ENCODE measurements at regions of chr3 and their contacts with region 1.

Region 1: GRCh38 chr3:58177747-58178527 is 32.8 kb downstream of the DNASE1L3 start:
- DNase-seq: peak; percentile 76 to 98
- H3K4me3 ChIP-seq: peak overlapping the region; percentile 15
- H3K4me1 ChIP-seq: no peaks in the 10 kb centered on the region
- H3K27me3 ChIP-seq: no peaks in the 10 kb centered on the region

Region 2: GRCh38 chr3:58082047-58082446 is 95.9 kb before region 1 on chr3:
- in situ Hi-C with region 1: no loop called
- DNase-seq: no peak
- H3K4me3 ChIP-seq: no peak overlapping the region
- H3K4me1 ChIP-seq: no peaks in the 10 kb centered on the region
- H3K27me3 ChIP-seq: no peaks in the 10 kb centered on the region

Region 3: DNA sequence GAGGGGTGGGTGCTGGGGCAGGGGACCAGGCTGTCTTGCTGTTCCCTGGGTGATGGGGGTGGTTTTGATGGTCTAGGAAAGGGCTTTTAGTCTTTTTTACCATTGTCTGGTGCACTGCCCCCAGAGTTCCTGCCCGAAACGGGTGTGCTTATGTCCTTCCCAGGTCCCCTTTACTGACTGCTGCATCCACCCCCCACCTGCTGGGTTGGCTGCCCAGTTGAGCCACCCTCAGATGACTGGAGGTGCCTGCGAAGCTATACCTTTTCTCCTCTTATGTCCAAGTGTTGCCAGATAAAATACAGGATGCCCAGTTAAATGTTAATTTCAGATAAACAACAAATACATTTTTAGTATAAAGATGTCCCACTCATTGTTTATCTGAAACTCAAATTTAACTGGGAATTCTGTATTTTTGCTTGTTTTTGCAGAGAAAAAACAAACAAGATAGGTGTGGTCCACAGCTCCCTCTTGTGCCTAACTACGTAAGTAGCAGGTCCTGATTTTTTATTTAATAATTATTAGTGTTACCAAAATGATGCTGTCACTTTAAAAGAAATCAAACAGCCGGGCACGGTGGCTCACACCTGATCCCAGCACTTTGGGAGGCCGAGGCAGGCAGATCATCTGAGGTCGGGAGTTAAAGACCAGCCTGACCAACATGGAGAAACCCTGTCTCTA is 122.0 kb after region 1 on chr3:
- in situ Hi-C with region 1: loop called (anchors 5 kb)
- DNase-seq: no peak
- H3K4me3 ChIP-seq: no peak overlapping the region
- H3K4me1 ChIP-seq: no peaks in the 10 kb centered on the region
- H3K27me3 ChIP-seq: peaks cover 10% of the 10 kb centered on the region; the same call in 1 of the 2 replicates

Region 4: DNA sequence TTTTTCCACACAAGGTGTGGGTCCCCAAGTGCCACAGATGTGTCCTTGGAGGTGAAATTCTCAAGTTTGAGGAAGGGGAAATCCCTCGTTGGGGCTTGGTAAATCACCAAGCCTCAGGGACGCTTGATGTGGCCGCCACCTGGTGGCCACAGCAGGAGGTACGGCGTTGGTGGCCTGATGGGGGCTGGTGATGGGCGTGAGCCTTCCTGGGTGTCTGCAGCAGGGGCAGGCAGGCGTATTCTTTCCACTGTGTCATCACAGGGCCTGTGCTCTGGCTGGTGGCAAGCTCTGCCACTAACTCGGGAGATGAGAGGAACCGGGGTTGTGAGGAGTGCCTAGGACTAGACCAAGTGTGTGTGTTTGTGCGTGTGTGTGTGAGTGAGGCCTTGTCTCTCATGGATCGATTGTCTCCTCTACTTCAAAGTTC is 354.9 kb after region 1 on chr3:
- in situ Hi-C with region 1: loop called (anchors 25 kb)
- DNase-seq: peak; percentile 57 to 83
- H3K4me3 ChIP-seq: no peak overlapping the region
- H3K4me1 ChIP-seq: no peaks in the 10 kb centered on the region
- H3K27me3 ChIP-seq: no peaks in the 10 kb centered on the region

Measured in HAP-1 (cell line).